Activated CD4-positive, alpha-beta T cell treated with anti-CD3 and anti-CD28 coated beads for 36 hours (primary cell): ENCODE measurements at regions of chr5 and their contacts with region 1.

Region 1: DNA sequence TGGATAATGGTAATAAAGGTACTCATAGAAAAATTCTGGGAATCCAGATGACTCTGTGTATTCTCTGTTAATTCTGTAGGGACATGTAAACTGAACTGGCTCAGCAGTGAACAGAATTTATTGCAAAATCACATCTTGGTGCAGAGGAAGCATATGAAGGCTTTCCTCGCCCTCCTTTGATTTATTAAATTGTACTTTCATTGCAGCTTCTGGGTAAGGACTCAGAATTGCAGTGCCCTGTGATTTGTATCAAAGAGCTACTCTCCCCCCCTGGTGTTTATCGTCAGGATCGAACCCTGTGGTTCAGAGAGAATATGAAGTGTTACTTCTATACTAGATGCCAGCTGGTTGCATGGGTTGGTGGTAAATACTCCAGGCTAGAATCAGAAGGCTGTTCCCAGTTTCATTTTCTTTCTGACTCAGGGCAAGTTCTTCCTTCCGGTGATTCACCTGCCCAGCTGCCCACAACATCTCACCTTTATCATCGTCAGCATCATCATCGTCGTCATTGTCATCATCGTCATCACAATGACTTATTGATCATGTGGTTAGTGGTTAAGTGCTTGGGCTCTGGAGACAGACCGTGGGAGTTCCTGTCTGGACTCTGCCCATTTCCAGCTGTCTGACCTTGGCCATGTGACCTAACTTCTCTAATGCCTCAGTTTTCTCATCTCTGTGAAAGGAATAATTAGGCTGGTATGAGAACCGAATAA is 238.8 kb downstream of the ARHGAP26 start:
- DNase-seq: peak; percentile 87
- ATAC-seq: peak; percentile 91
- H3K4me3 Mint-ChIP-seq: peak overlapping the region; percentile 34
- H3K27ac Mint-ChIP-seq: peak overlapping the region; percentile 83
- H3K4me1 Mint-ChIP-seq: peaks cover 56% of the 10 kb centered on the region
- H3K27me3 Mint-ChIP-seq: no peaks in the 10 kb centered on the region

Region 2: DNA sequence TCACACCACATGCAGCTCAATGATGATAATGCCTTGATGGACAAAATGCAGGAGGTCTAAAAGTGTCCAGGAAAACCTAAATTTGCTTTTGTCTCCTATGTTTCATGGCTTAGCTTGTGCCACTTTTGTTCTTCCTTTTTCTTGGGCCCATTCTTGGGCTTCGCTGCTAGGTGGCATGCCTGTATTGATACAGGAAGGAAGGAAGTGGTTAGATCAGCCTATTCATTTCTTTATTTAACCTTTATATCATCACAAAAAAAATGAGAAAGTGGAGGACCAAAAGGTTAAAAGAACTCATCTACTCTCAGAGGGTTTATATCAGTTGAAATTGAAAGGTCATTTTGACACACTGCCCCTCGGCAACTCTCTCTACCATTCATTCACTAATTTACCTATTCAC is 21.4 kb after region 1 on chr5:
- CTCF ChIA-PET with region 1: interaction called, 3 read pairs
- POLR2A ChIA-PET with region 1: no interaction called
- intact Hi-C with region 1: loop called in 1 of 2 experiments (anchors 1 kb)
- DNase-seq: peak; percentile 47
- ATAC-seq: peak; percentile 74
- H3K4me3 Mint-ChIP-seq: peak overlapping the region; percentile 11
- H3K27ac Mint-ChIP-seq: peak overlapping the region; percentile 39
- H3K4me1 Mint-ChIP-seq: peaks cover 48% of the 10 kb centered on the region
- H3K27me3 Mint-ChIP-seq: no peaks in the 10 kb centered on the region

Region 3: DNA sequence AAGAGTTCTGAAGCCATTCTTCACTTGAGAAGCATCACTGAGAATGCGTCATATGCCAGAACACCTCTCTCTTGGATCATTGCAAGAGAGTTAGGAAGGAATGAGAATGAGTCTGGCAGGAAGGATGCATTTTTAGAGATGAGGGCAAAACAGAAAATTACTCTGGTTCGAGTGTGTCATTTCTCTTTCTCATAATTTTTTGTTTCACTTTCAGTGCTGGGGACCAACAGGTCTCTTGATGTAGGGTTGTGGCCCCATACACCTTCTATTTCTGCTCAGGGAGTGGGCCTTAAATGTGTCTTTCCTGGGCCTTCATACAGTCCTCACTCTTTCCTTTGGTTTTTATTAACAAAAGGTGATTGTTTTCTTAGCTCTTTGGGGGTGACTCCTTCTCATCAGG is 92.2 kb after region 1 on chr5:
- CTCF ChIA-PET with region 1: no interaction called
- POLR2A ChIA-PET with region 1: no interaction called
- intact Hi-C with region 1: loop called (anchors 2 kb)
- DNase-seq: no peak
- ATAC-seq: peak; percentile 81
- H3K4me3 Mint-ChIP-seq: peak overlapping the region; percentile 7
- H3K27ac Mint-ChIP-seq: peak overlapping the region; percentile 68
- H3K4me1 Mint-ChIP-seq: peaks cover 31% of the 10 kb centered on the region
- H3K27me3 Mint-ChIP-seq: no peaks in the 10 kb centered on the region

Region 4: DNA sequence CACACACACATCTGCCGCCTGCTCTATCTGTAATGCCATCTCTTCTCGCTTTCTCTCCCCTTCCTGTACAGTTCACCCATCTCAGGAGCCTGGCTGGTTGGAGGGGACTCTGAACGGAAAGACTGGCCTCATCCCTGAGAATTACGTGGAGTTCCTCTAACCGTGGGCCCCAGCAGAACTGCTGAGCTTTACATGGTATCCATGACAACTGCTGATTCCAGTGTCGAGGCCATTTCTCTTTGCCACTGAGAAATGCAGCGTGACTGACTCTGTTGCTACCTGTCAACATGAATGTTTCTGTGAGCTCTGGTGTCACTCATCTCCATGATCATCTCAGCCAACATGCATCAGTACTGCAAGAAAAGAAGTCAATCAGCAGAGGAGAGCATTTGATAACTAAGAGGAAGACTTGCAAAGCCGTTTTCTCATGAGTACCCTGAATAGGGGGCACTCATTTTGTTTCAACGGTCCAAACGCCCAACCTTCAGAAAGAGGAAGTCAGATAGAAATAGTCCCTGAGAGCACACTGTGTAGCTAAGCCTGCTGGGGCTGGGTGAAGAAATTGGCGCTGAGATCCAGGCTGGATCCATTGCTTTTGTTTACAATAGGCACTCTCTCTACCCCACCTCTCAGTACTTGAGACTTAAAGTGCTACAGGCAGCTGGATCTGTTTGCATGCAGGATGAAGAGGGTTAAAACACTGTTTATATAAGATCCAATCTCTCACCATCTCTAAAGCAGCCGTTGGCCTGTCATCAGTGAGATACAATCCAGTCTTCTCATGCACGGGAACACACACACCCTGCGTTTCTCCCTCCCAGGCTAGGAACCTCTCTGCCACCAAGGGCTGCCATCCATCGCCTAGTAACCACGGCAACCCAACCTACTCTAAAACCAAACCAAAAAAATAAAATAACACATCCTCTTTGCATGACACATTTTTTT is 213.6 kb after region 1 on chr5:
- CTCF ChIA-PET with region 1: interaction called, 3 read pairs
- POLR2A ChIA-PET with region 1: no interaction called
- intact Hi-C with region 1: loop called in 1 of 2 experiments (anchors 2 kb)
- DNase-seq: peak; percentile 62
- ATAC-seq: peak; percentile 68
- H3K4me3 Mint-ChIP-seq: peak overlapping the region; percentile 25
- H3K27ac Mint-ChIP-seq: peak overlapping the region; percentile 92
- H3K4me1 Mint-ChIP-seq: peaks cover 46% of the 10 kb centered on the region
- H3K27me3 Mint-ChIP-seq: no peaks in the 10 kb centered on the region

Region 5: DNA sequence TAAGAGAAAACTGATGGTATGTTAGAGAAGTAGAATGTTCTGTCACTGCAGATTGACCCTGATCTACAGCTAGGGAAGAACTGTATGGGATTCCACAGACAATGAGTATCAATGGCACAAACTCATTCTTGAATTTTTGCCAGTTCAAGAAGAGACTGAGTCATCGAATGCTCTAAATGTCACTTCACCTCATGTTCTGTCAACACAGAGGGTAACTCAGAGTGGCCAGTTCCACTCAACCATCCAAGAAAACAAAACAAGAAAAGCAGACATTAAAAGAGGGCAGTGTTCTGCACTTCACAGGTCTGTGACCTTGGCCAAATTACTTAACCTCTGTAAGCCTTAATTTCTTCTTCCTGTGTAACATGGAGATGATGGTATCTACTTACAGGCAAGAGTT is 670.8 kb after region 1 on chr5:
- CTCF ChIA-PET with region 1: no interaction called
- POLR2A ChIA-PET with region 1: no interaction called
- intact Hi-C with region 1: loop called in 1 of 2 experiments (anchors 1 kb)
- DNase-seq: no peak
- ATAC-seq: peak; percentile 71
- H3K4me3 Mint-ChIP-seq: no peak overlapping the region
- H3K27ac Mint-ChIP-seq: no peak overlapping the region
- H3K4me1 Mint-ChIP-seq: peaks cover 26% of the 10 kb centered on the region
- H3K27me3 Mint-ChIP-seq: peaks cover 2% of the 10 kb centered on the region

Region 6: GRCh38 chr5:144191998-144192397 is 1183.0 kb after region 1 on chr5:
- CTCF ChIA-PET with region 1: interaction called, 3 read pairs
- POLR2A ChIA-PET with region 1: no interaction called
- intact Hi-C with region 1: loop called (anchors 1 kb)
- DNase-seq: peak; percentile 19
- ATAC-seq: peak; percentile 74
- H3K4me3 Mint-ChIP-seq: no peak overlapping the region
- H3K27ac Mint-ChIP-seq: no peak overlapping the region
- H3K4me1 Mint-ChIP-seq: peaks cover 22% of the 10 kb centered on the region
- H3K27me3 Mint-ChIP-seq: no peaks in the 10 kb centered on the region